ENCODE measurements at regions of chr12 and their contacts with region 1.

Region 1: GRCh38 chr12:6326336-6326838 is 15.5 kb downstream of the TNFRSF1A start:
- DNase-seq: no peak
- ATAC-seq: peak; percentile 25
- H3K4me3 ChIP-seq: no peak overlapping the region
- H3K27ac ChIP-seq: no peak overlapping the region
- H3K4me1 ChIP-seq: peaks cover 44% of the 10 kb centered on the region
- H3K27me3 ChIP-seq: no peaks in the 10 kb centered on the region
- CTCF ChIP-seq: peak in 4 of 7 experiments; percentile 16 to 48 (median 38)
- POLR2A ChIP-seq: no peak

Region 2: DNA sequence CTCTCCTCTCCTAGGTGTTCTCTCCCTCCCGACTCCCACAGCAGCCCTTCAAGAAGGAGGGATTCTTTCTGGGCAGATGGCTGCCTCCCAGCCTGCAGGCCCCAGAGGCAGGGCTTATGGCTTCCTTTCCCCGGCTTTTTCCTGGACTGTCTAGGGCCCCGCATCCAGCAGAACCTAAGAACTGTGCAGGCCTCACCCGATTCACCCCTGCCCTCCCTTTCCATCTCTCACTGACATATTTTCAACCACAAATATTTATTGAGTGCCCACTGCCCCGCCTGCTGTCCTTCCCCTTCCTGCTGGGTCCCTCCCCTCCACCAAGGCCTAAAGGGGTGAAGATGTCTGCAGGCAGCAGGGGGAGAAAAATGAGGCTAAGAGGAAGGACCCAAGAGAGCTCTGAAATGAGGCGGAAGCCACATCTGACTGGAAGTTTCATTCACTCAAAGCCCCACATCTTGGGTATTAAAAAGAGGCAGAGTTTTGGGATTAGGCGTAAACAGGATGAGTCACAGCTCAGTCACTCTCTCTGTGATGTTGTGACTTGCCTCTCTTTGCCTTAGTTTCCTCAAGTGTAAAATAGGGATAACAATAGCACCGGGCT is 46.1 kb after region 1 on chr12:
- intact Hi-C with region 1: loop called (anchors 5 kb)
- DNase-seq: peak in 3 of 4 donors; percentile 45 to 66 (median 49)
- ATAC-seq: no peak
- H3K4me3 ChIP-seq: no peak overlapping the region
- H3K27ac ChIP-seq: peak overlapping the region; percentile 67 to 91 (median 90)
- H3K4me1 ChIP-seq: peaks cover 54% of the 10 kb centered on the region
- H3K27me3 ChIP-seq: no peaks in the 10 kb centered on the region
- CTCF ChIP-seq: no peak
- POLR2A ChIP-seq: peak in 2 of 3 donors; percentile 42 to 49

Region 3: DNA sequence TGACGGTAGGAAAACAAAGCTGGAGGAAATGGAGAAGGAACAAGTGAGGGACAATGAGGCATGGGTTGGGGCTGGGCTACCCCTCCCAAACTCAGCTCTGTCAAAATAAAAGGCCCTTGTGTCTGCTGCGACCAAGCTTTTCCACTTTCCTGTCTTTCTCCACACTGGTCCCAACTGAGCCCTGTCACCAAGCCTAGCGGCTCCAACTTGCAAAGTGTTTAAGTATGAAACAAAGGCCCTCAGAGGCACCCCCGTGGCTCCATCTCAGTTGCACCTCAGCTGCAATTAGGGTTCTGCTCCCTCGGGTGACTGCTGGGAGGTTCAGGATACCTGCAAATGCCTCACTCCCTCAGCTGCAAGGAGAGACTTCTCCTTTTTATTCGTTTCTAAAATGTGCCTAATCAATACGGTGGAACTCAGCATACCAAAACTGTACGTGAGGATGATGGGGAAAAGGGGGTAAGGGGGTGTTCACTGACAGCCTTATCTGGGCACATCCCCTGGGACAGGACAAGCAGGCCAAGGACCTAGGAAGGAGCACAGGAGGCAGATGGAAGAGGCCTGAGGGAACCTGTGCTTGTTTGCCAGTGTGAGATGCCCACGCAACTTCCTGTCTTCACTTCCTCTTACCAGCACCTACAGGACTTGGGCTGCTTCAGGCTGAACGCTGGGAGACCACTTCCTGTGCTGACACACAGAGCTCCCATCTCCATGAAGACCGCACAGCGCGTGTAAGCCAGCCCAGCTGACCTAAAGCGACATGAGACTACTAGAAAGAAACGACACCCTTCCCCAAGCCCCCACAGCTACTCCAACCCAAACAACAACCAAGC is 135.2 kb after region 1 on chr12:
- intact Hi-C with region 1: no loop called
- DNase-seq: peak in 3 of 4 donors; percentile 25 to 81 (median 38)
- ATAC-seq: no peak
- H3K4me3 ChIP-seq: no peak overlapping the region
- H3K27ac ChIP-seq: peak overlapping the region in 2 of 4 donors; percentile 30 to 59
- H3K4me1 ChIP-seq: no peaks in the 10 kb centered on the region
- H3K27me3 ChIP-seq: no peaks in the 10 kb centered on the region
- CTCF ChIP-seq: no peak
- POLR2A ChIP-seq: no peak

Measured in body of pancreas (tissue), 4 donors.